ENCODE measurements at regions of chr12 and their contacts with region 1.

Region 1: GRCh38 chr12:110501752-110502738 is at the starts of genes RAD9B and VPS29:
- DNase-seq: peak; percentile 100
- H3K4me3 Mint-ChIP-seq: peak within 1 kb of the TSS; percentile 94
- H3K27ac Mint-ChIP-seq: peak within 1 kb of the TSS; percentile 93
- H3K4me1 Mint-ChIP-seq: peaks cover 40% of the 10 kb centered on the region
- H3K27me3 Mint-ChIP-seq: no peaks in the 10 kb centered on the region
- total RNA-seq, gene RAD9B: 1.1 to 2.0 TPM
- total RNA-seq, gene VPS29: 129 to 137 TPM

Region 2: DNA sequence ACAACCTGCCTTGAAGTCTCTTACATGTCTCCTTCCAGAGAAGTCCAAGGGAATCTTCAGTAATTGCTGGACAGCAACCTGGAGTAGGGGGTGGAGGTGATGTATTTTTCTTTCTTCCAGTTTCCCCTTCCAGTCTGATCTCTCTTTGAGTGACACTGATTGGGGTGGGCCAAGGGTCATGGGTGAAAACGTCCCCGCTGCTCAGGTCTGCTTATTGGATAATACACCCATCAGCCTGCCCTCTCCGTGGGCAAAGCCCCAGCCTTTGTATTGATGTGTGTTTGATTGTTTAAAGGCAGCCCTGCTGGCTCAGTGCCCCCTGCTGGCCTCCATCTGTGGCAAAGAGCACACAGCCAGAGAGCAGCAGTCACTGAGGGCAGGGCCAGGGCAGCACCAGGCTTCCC is 256.7 kb before region 1 on chr12:
- CTCF ChIA-PET with region 1: no interaction called
- POLR2A ChIA-PET with region 1: no interaction called
- DNase-seq: peak; percentile 62
- H3K4me3 Mint-ChIP-seq: no peak overlapping the region
- H3K27ac Mint-ChIP-seq: no peak overlapping the region
- H3K4me1 Mint-ChIP-seq: no peaks in the 10 kb centered on the region
- H3K27me3 Mint-ChIP-seq: peaks cover 6% of the 10 kb centered on the region

Region 3: DNA sequence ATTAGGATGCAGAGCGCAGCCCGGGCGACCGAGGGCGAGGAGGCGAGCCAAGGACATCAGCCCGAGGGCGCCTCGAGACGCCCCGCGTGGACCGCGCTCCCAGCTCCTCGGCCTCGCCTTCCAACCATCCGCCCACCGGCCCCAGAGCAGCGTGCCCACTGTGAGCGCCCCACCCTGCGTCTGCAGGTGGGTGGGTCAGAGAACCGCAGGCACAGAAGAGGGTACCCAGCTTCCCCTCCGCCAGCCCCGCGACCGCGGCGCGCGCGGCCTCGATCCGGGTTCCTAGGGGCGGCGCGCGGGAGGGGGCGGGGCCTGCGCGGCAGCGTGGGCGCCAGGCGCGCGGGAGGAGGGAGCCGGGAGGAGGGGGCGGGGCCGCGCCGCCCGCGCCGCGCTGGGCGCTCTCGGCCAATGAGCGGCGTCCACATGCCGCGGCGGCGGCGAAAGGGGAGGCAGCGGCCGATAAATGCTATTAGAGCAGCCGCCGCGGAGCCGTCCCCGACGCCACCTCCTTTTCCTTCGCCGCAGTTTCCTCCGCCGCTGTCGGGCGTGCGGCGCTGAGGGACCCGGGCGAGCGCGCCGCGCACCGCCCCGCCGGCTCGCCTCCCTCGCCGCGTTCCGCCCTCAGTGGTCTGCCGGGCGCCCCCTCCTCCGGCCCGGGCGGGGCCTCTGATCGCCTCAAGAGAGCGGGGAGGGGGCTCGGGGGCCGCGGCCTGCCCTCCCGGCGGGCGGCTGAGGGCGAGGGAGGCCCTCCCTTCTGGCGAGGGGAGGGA is 221.1 kb before region 1 on chr12 and contains the start of gene ATP2A2:
- CTCF ChIA-PET with region 1: interaction called, 3 read pairs
- POLR2A ChIA-PET with region 1: interaction called, 10 read pairs
- DNase-seq: peak; percentile 92
- H3K4me3 Mint-ChIP-seq: peak within 1 kb of the TSS; percentile 82
- H3K27ac Mint-ChIP-seq: peak within 1 kb of the TSS; percentile 85
- H3K4me1 Mint-ChIP-seq: peaks cover 46% of the 10 kb centered on the region
- H3K27me3 Mint-ChIP-seq: peaks cover 8% of the 10 kb centered on the region
- total RNA-seq, gene ATP2A2: 142 TPM

Region 4: DNA sequence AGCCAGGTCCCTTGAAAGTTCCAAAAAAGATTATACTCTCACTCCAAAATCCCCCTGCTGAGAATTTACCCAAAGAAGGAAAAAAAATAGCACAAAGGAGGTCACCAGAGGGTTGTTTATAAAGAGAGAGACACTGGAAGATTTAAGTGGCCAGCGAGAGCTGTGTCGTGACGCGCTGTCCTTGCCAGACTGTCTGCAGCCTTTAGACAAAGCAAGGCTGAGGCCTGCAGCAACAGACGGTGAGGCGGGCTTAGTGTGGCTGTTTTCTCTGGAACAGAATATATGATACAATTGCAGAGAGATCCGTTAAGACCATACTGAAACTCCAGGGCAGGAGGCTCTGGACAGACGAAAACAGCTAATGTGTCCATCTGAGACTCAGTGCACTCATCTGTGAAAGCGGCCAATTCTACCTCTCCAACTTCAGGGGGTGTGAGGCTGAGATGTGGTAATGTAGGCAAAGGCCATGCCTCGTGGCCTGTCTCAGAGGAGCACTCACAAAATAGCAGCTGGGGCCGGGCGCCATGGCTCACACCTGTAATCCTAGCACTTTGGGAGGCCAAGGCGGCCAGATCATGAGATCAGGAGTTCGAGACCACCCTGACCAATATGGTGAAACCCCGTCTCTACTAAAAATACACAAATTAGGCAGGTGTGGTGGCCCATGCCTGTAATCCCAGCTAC is 134.7 kb before region 1 on chr12:
- CTCF ChIA-PET with region 1: no interaction called
- POLR2A ChIA-PET with region 1: no interaction called
- DNase-seq: no peak
- H3K4me3 Mint-ChIP-seq: no peak overlapping the region
- H3K27ac Mint-ChIP-seq: no peak overlapping the region
- H3K4me1 Mint-ChIP-seq: no peaks in the 10 kb centered on the region
- H3K27me3 Mint-ChIP-seq: no peaks in the 10 kb centered on the region

Region 5: GRCh38 chr12:110563702-110564640 is 61.9 kb after region 1 on chr12:
- CTCF ChIA-PET with region 1: interaction called, 3 read pairs
- POLR2A ChIA-PET with region 1: interaction called, 13 read pairs
- DNase-seq: no peak
- H3K4me3 Mint-ChIP-seq: no peak overlapping the region
- H3K27ac Mint-ChIP-seq: peak overlapping the region; percentile 53
- H3K4me1 Mint-ChIP-seq: peaks cover 46% of the 10 kb centered on the region
- H3K27me3 Mint-ChIP-seq: no peaks in the 10 kb centered on the region

Region 6: DNA sequence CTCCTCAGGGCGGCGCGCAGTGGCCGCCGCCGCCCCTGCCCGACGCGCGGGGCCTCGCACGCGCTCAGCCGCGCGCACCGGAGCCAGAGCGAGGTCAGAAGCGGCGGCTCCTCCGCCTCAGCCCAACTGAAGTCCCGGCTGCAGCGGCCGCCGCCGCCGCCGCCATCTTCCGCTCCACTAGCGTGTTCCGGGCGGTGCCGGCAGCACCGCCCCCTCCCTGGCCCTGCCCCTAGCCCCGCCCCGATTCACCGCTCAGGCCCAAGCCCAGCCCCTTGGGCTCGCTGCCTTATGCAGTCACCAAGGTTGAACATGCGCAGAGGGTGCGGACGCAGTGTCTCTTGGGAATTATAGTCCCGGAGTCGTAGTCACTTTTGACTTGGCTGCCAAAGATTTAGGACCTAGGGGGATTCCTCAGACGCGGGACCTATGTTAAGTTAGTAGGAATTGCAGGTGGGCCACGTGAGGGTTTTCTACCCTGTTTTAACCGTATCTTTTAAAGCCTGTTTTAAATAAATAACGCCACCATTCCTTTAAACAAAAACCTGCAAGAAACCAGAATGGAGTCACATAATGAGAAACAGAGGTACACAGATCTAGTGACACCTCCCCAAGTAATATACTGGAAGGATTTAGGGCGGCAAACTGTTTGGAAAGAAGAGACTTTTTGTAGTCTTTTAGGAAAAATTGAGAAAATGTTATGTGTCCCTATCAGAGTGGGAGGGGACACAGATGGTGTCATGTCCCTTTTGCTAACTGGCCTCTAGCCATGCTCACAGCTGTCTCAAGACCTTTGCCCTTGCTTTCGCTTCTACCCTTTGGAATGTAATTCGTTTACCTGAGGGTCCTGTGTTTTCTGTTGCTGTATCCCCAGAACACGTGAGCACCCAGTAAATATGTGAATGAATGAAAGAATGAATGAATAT is 81.4 kb after region 1 on chr12 and contains the start of gene PPTC7:
- CTCF ChIA-PET with region 1: no interaction called
- POLR2A ChIA-PET with region 1: interaction called, 24 read pairs
- DNase-seq: peak; percentile 97
- H3K4me3 Mint-ChIP-seq: peak within 1 kb of the TSS; percentile 88
- H3K27ac Mint-ChIP-seq: peak within 1 kb of the TSS; percentile 88
- H3K4me1 Mint-ChIP-seq: peaks cover 64% of the 10 kb centered on the region
- H3K27me3 Mint-ChIP-seq: no peaks in the 10 kb centered on the region
- total RNA-seq, gene PPTC7: 31.5 to 31.8 TPM

Region 7: GRCh38 chr12:110647631-110648040 is 145.6 kb after region 1 on chr12:
- CTCF ChIA-PET with region 1: no interaction called
- POLR2A ChIA-PET with region 1: no interaction called
- DNase-seq: peak; percentile 21
- H3K4me3 Mint-ChIP-seq: no peak overlapping the region
- H3K27ac Mint-ChIP-seq: no peak overlapping the region
- H3K4me1 Mint-ChIP-seq: peaks cover 17% of the 10 kb centered on the region
- H3K27me3 Mint-ChIP-seq: no peaks in the 10 kb centered on the region

Region 8: GRCh38 chr12:110742718-110743570 is 240.9 kb after region 1 on chr12 and contains the start of gene PPP1CC:
- CTCF ChIA-PET with region 1: no interaction called
- POLR2A ChIA-PET with region 1: interaction called, 10 read pairs
- DNase-seq: peak; percentile 93
- H3K4me3 Mint-ChIP-seq: peak within 1 kb of the TSS; percentile 99
- H3K27ac Mint-ChIP-seq: peak within 1 kb of the TSS; percentile 98
- H3K4me1 Mint-ChIP-seq: peaks cover 39% of the 10 kb centered on the region
- H3K27me3 Mint-ChIP-seq: no peaks in the 10 kb centered on the region
- total RNA-seq, gene PPP1CC: 221 to 230 TPM

Measured in activated CD4-positive, alpha-beta memory T cell treated with anti-CD3 and anti-CD28 coated beads, Interleukin-2, amount 10 ng/mL, durations not matched to agents 7 days and 5 days (primary cell).